CD8-positive, alpha-beta memory T cell (primary cell): ENCODE measurements at regions of chr2 and their contacts with region 1.

Region 1: GRCh38 chr2:26345545-26346453 is at the start of gene SELENOI:
- DNase-seq: peak; percentile 99 to 100 (median 100)
- H3K4me3 ChIP-seq: peak within 1 kb of the TSS; percentile 93
- H3K4me3 Mint-ChIP-seq: peak within 1 kb of the TSS; percentile 94 to 100 (median 98)
- H3K27ac ChIP-seq: peak within 1 kb of the TSS; percentile 85
- H3K27ac Mint-ChIP-seq: peak within 1 kb of the TSS; percentile 85 to 100 (median 98)
- H3K4me1 ChIP-seq: peaks cover 36% of the 10 kb centered on the region
- H3K4me1 Mint-ChIP-seq: peaks cover 37 to 60% (median 48%) of the 10 kb centered on the region in 3 donors
- H3K27me3 ChIP-seq: no peaks in the 10 kb centered on the region
- H3K27me3 Mint-ChIP-seq: no peaks in the 10 kb centered on the region
- total RNA-seq, gene SELENOI: 58.4 to 61.9 TPM

Region 2: DNA sequence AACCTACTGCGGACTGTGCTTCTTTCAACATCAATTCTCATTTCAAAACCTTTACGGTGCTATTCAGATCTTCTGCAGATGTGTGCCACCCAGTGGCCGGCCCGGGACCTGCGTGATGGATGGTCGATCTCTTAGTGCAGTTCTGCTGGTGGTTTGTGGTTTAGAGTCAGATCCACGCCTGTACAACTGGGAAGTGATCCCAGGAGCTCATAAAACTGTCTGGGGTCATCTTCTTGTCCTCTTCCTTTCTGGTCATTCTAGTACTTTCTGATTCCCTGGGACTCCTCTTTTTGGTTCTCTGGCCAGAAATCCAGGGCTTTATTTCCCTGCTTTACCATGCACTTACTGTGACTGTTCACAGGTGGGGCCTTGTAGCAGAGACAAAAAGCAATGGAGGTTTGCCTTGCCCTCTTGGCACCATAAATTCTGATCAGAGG is 15.7 kb before region 1 on chr2:
- CTCF ChIA-PET with region 1: interaction called, 12 read pairs
- POLR2A ChIA-PET with region 1: interaction called, 5 read pairs
- DNase-seq: peak; percentile 57 to 85 (median 68)
- H3K4me3 ChIP-seq: no peak overlapping the region
- H3K4me3 Mint-ChIP-seq: peak overlapping the region in 3 of 7 donors; percentile 4 to 27 (median 11)
- H3K27ac ChIP-seq: no peak overlapping the region
- H3K27ac Mint-ChIP-seq: peak overlapping the region in 2 of 8 donors; percentile 0 to 4
- H3K4me1 ChIP-seq: no peaks in the 10 kb centered on the region
- H3K4me1 Mint-ChIP-seq: peaks cover 6 to 8% (median 8%) of the 10 kb centered on the region in 3 donors
- H3K27me3 ChIP-seq: no peaks in the 10 kb centered on the region
- H3K27me3 Mint-ChIP-seq: no peaks in the 10 kb centered on the region